Colonic mucosa (tissue), 4 donors: ENCODE measurements at regions of chr22 and their contacts with region 1.

Region 1: DNA sequence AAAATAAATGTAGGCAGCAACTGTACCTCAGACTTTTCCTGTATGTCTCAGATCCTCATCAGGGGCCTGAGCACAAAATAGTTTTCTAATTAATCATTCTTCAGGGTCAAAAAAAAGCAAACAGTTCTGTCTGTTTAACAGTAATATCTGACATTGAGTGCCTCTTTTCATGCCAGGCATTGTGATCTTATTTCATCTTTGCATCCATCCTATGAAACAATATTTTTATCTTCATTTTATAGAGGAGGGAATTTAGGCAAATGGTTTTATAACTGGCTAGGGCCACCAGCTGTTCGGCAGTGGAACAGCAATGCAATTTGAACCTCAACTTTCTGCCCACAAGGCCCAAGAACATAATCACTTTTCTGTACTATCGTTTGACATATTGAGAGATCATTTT is 145.6 kb downstream of the WNT7B start:
- DNase-seq: no peak
- H3K4me3 ChIP-seq: no peak overlapping the region
- H3K27ac ChIP-seq: no peak overlapping the region
- H3K4me1 ChIP-seq: no peaks in the 10 kb centered on the region
- H3K27me3 ChIP-seq: no peaks in the 10 kb centered on the region
- CTCF ChIP-seq: no peak

Region 2: GRCh38 chr22:45645526-45646414 is 185.6 kb before region 1 on chr22:
- intact Hi-C with region 1: loop called (anchors 5 kb)
- DNase-seq: peak; percentile 81
- H3K4me3 ChIP-seq: peak overlapping the region; percentile 6
- H3K27ac ChIP-seq: no peak overlapping the region
- H3K4me1 ChIP-seq: peaks cover 4% of the 10 kb centered on the region
- H3K27me3 ChIP-seq: no peaks in the 10 kb centered on the region
- CTCF ChIP-seq: peak; percentile 95

Region 3: GRCh38 chr22:45775569-45776312 is 55.7 kb before region 1 on chr22:
- intact Hi-C with region 1: no loop called
- DNase-seq: no peak
- H3K4me3 ChIP-seq: no peak overlapping the region
- H3K27ac ChIP-seq: no peak overlapping the region
- H3K4me1 ChIP-seq: no peaks in the 10 kb centered on the region
- H3K27me3 ChIP-seq: no peaks in the 10 kb centered on the region
- CTCF ChIP-seq: no peak

Region 4: GRCh38 chr22:45948081-45948648 is 116.8 kb after region 1 on chr22:
- intact Hi-C with region 1: no loop called
- DNase-seq: no peak
- H3K4me3 ChIP-seq: no peak overlapping the region
- H3K27ac ChIP-seq: no peak overlapping the region
- H3K4me1 ChIP-seq: no peaks in the 10 kb centered on the region
- H3K27me3 ChIP-seq: no peaks in the 10 kb centered on the region
- CTCF ChIP-seq: no peak